ENCODE measurements at regions of chr22 and their contacts with region 1.

Region 1: DNA sequence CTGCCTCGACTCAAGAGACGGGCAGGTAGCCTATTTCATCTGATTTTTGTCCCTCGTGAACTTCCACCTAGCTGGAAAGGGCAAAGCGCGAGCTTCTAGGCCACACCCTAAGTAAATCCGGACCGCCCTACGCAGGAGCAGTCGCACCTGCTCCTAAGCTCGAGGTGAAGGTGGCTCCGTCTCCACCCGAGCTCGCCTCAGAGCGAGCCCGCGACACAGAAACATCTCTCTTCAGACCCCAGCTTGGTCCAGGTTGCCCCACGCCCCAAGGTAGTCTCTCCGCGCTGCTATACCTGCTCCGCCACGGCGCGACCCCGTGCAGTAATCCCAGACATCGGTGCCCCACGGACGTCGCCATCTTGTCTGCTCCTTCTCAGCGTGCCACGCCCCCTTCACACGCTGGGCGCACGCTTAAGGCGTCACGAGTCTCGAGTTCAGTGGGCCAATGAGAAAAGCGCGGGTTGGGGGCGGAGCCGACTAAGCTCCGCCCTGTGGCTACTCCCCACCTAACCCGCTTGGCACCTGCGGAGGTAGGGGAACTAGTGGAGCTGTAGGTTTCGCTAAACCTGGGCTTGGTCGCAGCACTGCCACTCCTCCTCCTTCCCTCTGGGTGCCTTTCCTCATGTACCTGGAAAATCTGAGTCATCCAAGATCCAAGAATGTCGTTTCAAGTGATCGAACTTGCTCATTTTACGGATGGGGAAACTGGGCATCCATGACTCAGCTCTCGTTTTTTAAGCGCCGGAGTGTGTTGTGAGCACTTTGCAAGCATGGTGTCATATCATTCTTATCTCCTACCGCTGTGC is at the start of gene PISD:
- DNase-seq: peak; percentile 98
- ATAC-seq: peak; percentile 91
- H3K4me3 Mint-ChIP-seq: peak within 1 kb of the TSS; percentile 92
- H3K27ac Mint-ChIP-seq: peak within 1 kb of the TSS; percentile 91
- H3K4me1 Mint-ChIP-seq: peaks cover 40% of the 10 kb centered on the region
- H3K27me3 Mint-ChIP-seq: no peaks in the 10 kb centered on the region
- total RNA-seq, gene PISD: 34.7 to 40.0 TPM

Region 2: GRCh38 chr22:31637938-31638618 is 24.0 kb before region 1 on chr22:
- CTCF ChIA-PET with region 1: interaction called, 16 read pairs
- DNase-seq: peak; percentile 78
- ATAC-seq: peak; percentile 66
- H3K4me3 Mint-ChIP-seq: peak overlapping the region; percentile 65
- H3K27ac Mint-ChIP-seq: peak overlapping the region; percentile 88
- H3K4me1 Mint-ChIP-seq: peaks cover 55% of the 10 kb centered on the region
- H3K27me3 Mint-ChIP-seq: no peaks in the 10 kb centered on the region

Region 3: DNA sequence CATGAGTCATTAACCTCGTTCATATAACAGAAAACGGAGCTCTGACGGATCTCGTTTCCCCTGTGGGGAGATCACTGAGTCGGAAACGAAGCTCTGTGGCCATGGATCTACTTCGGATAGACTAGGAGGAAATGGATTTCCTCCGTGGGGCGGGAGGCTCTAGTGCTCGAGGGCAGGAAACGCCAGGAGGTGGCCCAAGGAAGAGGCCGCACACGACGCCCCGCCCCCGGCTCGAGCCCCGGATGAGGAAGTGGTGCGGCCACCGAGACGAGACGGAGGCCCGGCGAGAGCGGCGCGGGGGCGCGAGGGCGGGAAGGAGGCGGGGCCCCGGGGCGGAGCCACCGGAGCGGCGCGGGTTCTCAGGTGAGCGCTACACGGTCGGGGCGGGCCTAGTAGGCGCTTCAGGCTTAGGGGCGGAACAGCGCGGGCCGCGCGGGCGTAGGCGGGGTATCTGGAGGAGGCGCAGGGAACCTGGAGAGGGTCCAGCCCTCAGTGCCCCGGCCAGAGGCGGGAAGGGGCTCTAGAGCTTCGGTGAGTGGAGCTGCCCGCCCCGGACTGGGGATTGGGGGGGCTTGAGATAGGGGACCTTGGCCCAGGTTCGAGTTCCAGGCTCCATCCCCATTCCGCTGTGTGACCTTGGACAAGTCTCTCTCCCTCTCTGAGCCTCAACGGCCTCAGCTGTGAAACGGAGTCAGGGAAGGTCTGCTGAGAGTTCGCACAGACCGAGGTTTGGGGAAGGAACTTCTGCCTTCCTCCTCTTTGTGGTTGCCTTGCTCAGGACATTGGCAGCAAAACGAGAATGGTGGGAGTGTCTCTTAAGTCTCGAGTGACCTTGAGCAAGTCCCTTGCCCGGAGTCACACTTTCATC is 91.8 kb after region 1 on chr22 and contains the start of gene DEPDC5:
- CTCF ChIA-PET with region 1: interaction called, 16 read pairs
- DNase-seq: peak; percentile 96
- ATAC-seq: peak; percentile 82
- H3K4me3 Mint-ChIP-seq: peak within 1 kb of the TSS; percentile 95
- H3K27ac Mint-ChIP-seq: peak within 1 kb of the TSS; percentile 98
- H3K4me1 Mint-ChIP-seq: peaks cover 42% of the 10 kb centered on the region
- H3K27me3 Mint-ChIP-seq: no peaks in the 10 kb centered on the region
- total RNA-seq, gene DEPDC5: 45.7 to 50.3 TPM

Region 4: GRCh38 chr22:31926969-31927368 is 264.9 kb after region 1 on chr22:
- CTCF ChIA-PET with region 1: no interaction called
- DNase-seq: no peak
- ATAC-seq: no peak
- H3K4me3 Mint-ChIP-seq: no peak overlapping the region
- H3K27ac Mint-ChIP-seq: no peak overlapping the region
- H3K4me1 Mint-ChIP-seq: peaks cover 10% of the 10 kb centered on the region
- H3K27me3 Mint-ChIP-seq: peaks cover 33% of the 10 kb centered on the region

Region 5: GRCh38 chr22:31952459-31952858 is 290.4 kb after region 1 on chr22:
- CTCF ChIA-PET with region 1: interaction called, 39 read pairs
- DNase-seq: no peak
- ATAC-seq: no peak
- H3K4me3 Mint-ChIP-seq: no peak overlapping the region
- H3K27ac Mint-ChIP-seq: no peak overlapping the region
- H3K4me1 Mint-ChIP-seq: peaks cover 77% of the 10 kb centered on the region
- H3K27me3 Mint-ChIP-seq: no peaks in the 10 kb centered on the region

Region 6: DNA sequence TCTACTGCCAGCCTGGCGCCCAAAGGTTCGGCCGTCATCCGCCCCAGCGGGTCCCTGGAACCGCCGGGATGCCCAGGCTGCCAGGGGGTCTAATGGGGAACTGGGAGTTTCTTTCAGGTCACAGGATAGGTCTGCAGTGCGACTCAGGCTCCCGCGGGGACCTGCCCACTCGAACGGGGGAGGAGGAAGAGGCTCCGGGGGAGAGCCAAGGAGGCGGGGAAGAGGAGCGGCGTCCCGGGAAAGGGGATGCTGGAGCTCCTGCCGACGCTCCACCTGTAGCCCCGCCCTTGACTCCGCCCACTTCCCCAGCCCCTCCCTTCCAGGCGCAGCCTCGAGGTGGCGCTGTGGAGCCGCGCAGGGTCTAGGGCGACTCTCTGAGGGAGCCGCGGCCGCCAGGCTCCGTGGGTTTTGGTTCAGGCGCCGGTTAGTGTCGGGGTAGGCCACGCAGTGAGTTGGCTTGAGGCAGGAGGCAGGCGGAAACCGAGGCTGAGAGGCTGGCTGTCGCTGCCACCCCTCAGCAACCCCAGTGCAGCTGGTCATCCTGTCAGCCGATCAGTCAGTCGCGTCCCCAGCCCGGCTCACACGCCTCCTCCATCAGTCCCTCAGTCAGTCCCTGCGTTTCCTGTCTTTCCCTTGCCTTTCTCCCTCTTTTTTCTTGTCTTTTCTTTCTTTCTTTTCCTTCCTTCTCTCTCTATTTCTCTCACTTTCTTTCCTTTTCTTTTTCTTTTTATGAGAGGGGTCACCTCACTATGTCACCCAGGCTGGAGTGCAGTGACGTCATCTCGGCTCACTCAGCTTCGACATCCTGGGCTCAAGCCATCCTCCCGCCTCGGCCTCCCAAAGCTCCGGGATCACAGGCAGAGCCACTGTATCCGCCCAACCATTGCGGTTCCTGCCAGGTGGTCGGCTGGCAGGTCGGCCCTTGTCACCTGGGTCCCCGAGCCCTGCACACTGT is 308.7 kb after region 1 on chr22:
- CTCF ChIA-PET with region 1: interaction called, 100 read pairs
- DNase-seq: peak; percentile 89
- ATAC-seq: peak; percentile 97
- H3K4me3 Mint-ChIP-seq: peak overlapping the region; percentile 70
- H3K27ac Mint-ChIP-seq: peak overlapping the region; percentile 49
- H3K4me1 Mint-ChIP-seq: peaks cover 14% of the 10 kb centered on the region
- H3K27me3 Mint-ChIP-seq: peaks cover 2% of the 10 kb centered on the region

Measured in activated CD8-positive, alpha-beta memory T cell treated with anti-CD3 and anti-CD28 coated beads, Interleukin-2, amount 10 ng/mL, durations not matched to agents 7 days and 5 days (primary cell).